ENCODE measurements at regions of chr17 and their contacts with region 1.

Region 1: GRCh38 chr17:36601303-36602029 is at the start of gene MRM1:
- DNase-seq: peak; percentile 84
- ATAC-seq: peak; percentile 90
- H3K4me3 Mint-ChIP-seq: peak within 1 kb of the TSS; percentile 90
- H3K27ac Mint-ChIP-seq: peak within 1 kb of the TSS; percentile 88
- H3K4me1 Mint-ChIP-seq: peaks cover 35% of the 10 kb centered on the region
- H3K27me3 Mint-ChIP-seq: no peaks in the 10 kb centered on the region
- CTCF ChIP-seq: no peak
- total RNA-seq, gene MRM1: 14.3 and 15.6 TPM in 2 replicates

Region 2: GRCh38 chr17:36534840-36535668 is 66.4 kb before region 1 on chr17 and contains the starts of genes MYO19 and PIGW:
- CTCF ChIA-PET with region 1: no interaction called
- POLR2A ChIA-PET with region 1: interaction called, 25 read pairs
- intact Hi-C with region 1: loop called (anchors 1 kb)
- DNase-seq: peak; percentile 88
- ATAC-seq: peak; percentile 82
- H3K4me3 Mint-ChIP-seq: peak within 1 kb of the TSS; percentile 98
- H3K27ac Mint-ChIP-seq: peak within 1 kb of the TSS; percentile 100
- H3K4me1 Mint-ChIP-seq: peaks cover 20% of the 10 kb centered on the region
- H3K27me3 Mint-ChIP-seq: no peaks in the 10 kb centered on the region
- CTCF ChIP-seq: no peak
- total RNA-seq, gene MYO19: 70.8 and 85.6 TPM in 2 replicates
- total RNA-seq, gene PIGW: 18.2 and 20.7 TPM in 2 replicates

Region 3: GRCh38 chr17:36616061-36617029 is 14.9 kb after region 1 on chr17:
- CTCF ChIA-PET with region 1: interaction called, 11 read pairs
- POLR2A ChIA-PET with region 1: no interaction called
- intact Hi-C with region 1: no loop called
- DNase-seq: no peak
- ATAC-seq: no peak
- H3K4me3 Mint-ChIP-seq: no peak overlapping the region
- H3K27ac Mint-ChIP-seq: no peak overlapping the region
- H3K4me1 Mint-ChIP-seq: no peaks in the 10 kb centered on the region
- H3K27me3 Mint-ChIP-seq: no peaks in the 10 kb centered on the region
- CTCF ChIP-seq: no peak

Region 4: GRCh38 chr17:36948717-36949460 is 347.4 kb after region 1 on chr17 and contains the start of gene AATF:
- CTCF ChIA-PET with region 1: interaction called, 3 read pairs
- POLR2A ChIA-PET with region 1: interaction called, 4 read pairs
- intact Hi-C with region 1: loop called (anchors 5 kb)
- DNase-seq: peak; percentile 97
- ATAC-seq: peak; percentile 95
- H3K4me3 Mint-ChIP-seq: peak within 1 kb of the TSS; percentile 92
- H3K27ac Mint-ChIP-seq: peak within 1 kb of the TSS; percentile 93
- H3K4me1 Mint-ChIP-seq: peaks cover 49% of the 10 kb centered on the region
- H3K27me3 Mint-ChIP-seq: peaks cover 18% of the 10 kb centered on the region
- CTCF ChIP-seq: no peak
- total RNA-seq, gene AATF: 73.2 and 86.1 TPM in 2 replicates

Region 5: DNA sequence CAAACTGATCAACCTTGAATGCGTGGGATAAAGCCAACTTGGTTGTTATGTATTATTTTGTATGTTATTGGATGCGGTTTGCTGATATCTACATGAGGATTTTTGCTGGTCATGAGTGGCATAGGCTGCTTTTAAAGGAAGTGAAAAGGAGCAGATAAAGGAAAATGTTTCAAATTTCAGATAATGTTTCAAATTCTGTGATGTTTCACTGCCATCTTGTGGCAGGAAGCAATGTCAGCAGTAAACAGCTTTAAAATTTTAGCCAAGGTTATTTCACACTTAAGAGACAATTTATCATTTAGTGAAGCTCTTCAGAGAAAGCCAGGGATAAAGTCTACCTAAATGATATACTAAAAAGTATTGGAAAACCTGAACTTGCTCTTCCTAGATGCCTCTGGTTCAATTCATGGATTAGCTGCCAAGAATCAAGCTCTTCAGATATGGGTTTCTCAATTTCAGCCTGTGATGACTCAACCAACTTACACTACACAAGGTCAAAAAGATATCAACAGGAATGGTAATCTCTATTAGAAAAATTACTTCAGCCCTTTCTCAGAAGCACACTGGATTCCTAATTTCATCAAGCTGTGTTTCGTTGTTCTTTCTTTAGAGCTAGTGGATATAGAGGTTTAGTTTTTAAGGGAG is 638.3 kb after region 1 on chr17:
- CTCF ChIA-PET with region 1: interaction called, 18 read pairs
- POLR2A ChIA-PET with region 1: no interaction called
- intact Hi-C with region 1: loop called (anchors 1 kb)
- DNase-seq: no peak
- ATAC-seq: no peak
- H3K4me3 Mint-ChIP-seq: no peak overlapping the region
- H3K27ac Mint-ChIP-seq: no peak overlapping the region
- H3K4me1 Mint-ChIP-seq: no peaks in the 10 kb centered on the region
- H3K27me3 Mint-ChIP-seq: no peaks in the 10 kb centered on the region
- CTCF ChIP-seq: no peak

Region 6: DNA sequence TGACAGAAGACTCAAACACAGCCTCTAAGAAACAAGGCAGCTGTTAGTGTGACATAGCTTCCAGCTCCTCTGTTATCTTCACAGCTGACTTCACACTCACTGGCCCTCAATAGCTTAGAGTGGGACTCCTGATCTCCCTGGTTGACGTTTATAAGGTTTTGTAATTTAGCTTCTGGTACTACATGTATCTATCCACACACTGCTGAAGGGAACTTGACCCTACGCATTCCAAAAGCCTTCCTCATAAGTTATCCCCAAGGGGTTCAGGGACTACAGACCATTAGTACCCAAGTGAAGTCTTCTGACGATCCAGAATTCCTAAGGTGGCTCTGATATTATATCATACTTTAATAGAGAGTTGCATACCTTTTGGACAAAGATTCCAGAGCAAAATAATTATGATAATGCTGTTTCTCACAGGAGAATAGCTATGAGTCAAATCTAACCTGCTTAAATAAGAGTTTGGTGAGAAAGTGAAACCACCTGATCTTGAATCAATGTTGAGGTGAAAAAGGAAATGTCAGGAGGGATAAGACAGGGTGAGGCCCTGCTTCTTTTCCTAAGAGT is 790.6 kb after region 1 on chr17:
- CTCF ChIA-PET with region 1: no interaction called
- POLR2A ChIA-PET with region 1: no interaction called
- intact Hi-C with region 1: loop called (anchors 2 kb)
- DNase-seq: no peak
- ATAC-seq: no peak
- H3K4me3 Mint-ChIP-seq: no peak overlapping the region
- H3K27ac Mint-ChIP-seq: no peak overlapping the region
- H3K4me1 Mint-ChIP-seq: peaks cover 7% of the 10 kb centered on the region
- H3K27me3 Mint-ChIP-seq: no peaks in the 10 kb centered on the region
- CTCF ChIP-seq: no peak

Measured in activated B cell treated with CpG ODN at 0.5 μM for 24 hours (primary cell).